SK-N-SH (cell line): ENCODE measurements at regions of chr7 and their contacts with region 1.

Region 1: DNA sequence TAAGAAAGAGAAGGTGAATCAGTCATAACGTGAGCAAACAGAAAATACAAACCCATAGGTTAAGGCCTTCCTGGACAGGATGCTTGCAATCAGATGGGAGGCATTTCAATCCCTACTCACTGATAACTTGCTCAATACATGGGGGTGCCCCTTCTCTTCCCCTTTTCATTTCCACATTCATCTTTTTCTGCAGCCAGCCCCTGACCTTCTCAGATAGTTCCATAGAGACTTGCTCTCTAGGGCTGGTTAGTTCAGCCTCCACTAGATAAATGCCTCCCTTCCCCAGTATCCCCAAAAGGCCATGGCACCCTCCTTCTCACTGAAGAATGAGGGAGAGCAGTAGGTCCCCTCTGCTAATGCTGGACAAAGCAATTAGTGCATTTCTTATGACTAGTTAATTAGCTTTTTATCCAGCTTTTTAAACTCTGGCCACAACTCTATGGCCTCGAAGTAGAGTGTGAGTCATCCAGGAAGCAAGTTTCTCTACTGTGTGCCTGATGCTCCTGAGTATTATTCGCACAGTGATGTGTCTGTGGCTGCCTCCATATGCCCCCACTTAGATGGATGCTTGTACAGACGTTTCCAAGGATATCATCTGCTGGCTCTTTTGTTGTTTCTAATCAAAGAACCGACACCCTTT is 12.7 kb downstream of the CHN2 start:
- DNase-seq: no peak
- H3K4me3 ChIP-seq: no peak overlapping the region
- H3K27ac ChIP-seq: no peak overlapping the region
- H3K4me1 ChIP-seq: no peaks in the 10 kb centered on the region
- H3K27me3 ChIP-seq: no peaks in the 10 kb centered on the region
- CTCF ChIP-seq: no peak
- EP300 ChIP-seq: no peak
- RAD21 ChIP-seq: no peak

Region 2: GRCh38 chr7:28729281-28729680 is 478.0 kb before region 1 on chr7:
- CTCF ChIA-PET with region 1: no interaction called
- POLR2A ChIA-PET with region 1: no interaction called
- DNase-seq: no peak
- H3K4me3 ChIP-seq: no peak overlapping the region
- H3K27ac ChIP-seq: no peak overlapping the region
- H3K4me1 ChIP-seq: peaks cover 5 to 7% of the 10 kb centered on the region in 2 experiments
- H3K27me3 ChIP-seq: no peaks in the 10 kb centered on the region
- CTCF ChIP-seq: no peak
- EP300 ChIP-seq: no peak
- RAD21 ChIP-seq: no peak

Region 3: DNA sequence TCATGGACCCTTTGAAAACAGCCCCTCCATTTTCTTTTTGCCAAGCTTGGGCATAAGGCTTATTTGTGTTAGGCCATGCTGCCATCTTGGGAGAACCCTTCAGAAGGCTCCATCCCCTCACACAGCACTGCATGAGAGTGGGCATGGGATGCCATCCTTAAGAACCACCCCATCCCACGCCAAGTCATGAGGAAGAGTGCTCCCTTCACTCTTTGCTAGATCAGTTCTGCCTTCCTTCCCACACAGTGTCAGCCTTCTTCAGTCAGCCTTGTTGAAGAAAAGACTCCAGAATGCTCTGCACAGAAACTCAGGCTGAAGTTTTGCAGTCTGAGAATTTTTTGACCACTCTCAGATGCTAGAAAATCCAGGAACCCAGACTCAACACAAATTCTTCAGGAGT is 28.2 kb before region 1 on chr7:
- CTCF ChIA-PET with region 1: no interaction called
- POLR2A ChIA-PET with region 1: no interaction called
- DNase-seq: no peak
- H3K4me3 ChIP-seq: no peak overlapping the region
- H3K27ac ChIP-seq: no peak overlapping the region
- H3K4me1 ChIP-seq: no peaks in the 10 kb centered on the region
- H3K27me3 ChIP-seq: no peaks in the 10 kb centered on the region
- CTCF ChIP-seq: no peak
- EP300 ChIP-seq: no peak
- RAD21 ChIP-seq: no peak

Region 4: GRCh38 chr7:29194594-29195427 is 12.5 kb before region 1 on chr7 and contains the start of gene CHN2:
- CTCF ChIA-PET with region 1: interaction called, 69 read pairs
- POLR2A ChIA-PET with region 1: no interaction called
- DNase-seq: peak; percentile 90
- H3K4me3 ChIP-seq: peak within 1 kb of the TSS; percentile 59 to 61
- H3K27ac ChIP-seq: no peak within 1 kb of the TSS; a peak in 1 of 4 replicates
- H3K4me1 ChIP-seq: peaks cover 0 to 7% of the 10 kb centered on the region in 2 experiments; a peak in 2 of 4 replicates
- H3K27me3 ChIP-seq: peaks cover 48% of the 10 kb centered on the region
- CTCF ChIP-seq: no peak
- EP300 ChIP-seq: no peak
- RAD21 ChIP-seq: 0 out of 2 replicates have a peak, but pooled peaks have one; percentile 13
- polyA plus RNA-seq, gene CHN2: 0.02 TPM in 1 of 2 replicates, not detected in the other

Region 5: GRCh38 chr7:29884399-29885272 is 677.4 kb after region 1 on chr7:
- CTCF ChIA-PET with region 1: no interaction called
- POLR2A ChIA-PET with region 1: no interaction called
- DNase-seq: peak; percentile 47
- H3K4me3 ChIP-seq: no peak overlapping the region
- H3K27ac ChIP-seq: no peak overlapping the region
- H3K4me1 ChIP-seq: no peaks in the 10 kb centered on the region; a peak in 1 of 4 replicates
- H3K27me3 ChIP-seq: no peaks in the 10 kb centered on the region
- CTCF ChIP-seq: no peak
- EP300 ChIP-seq: no peak
- RAD21 ChIP-seq: no peak